A673 (cell line): ENCODE measurements at regions of chr15 and their contacts with region 1.

Region 1: DNA sequence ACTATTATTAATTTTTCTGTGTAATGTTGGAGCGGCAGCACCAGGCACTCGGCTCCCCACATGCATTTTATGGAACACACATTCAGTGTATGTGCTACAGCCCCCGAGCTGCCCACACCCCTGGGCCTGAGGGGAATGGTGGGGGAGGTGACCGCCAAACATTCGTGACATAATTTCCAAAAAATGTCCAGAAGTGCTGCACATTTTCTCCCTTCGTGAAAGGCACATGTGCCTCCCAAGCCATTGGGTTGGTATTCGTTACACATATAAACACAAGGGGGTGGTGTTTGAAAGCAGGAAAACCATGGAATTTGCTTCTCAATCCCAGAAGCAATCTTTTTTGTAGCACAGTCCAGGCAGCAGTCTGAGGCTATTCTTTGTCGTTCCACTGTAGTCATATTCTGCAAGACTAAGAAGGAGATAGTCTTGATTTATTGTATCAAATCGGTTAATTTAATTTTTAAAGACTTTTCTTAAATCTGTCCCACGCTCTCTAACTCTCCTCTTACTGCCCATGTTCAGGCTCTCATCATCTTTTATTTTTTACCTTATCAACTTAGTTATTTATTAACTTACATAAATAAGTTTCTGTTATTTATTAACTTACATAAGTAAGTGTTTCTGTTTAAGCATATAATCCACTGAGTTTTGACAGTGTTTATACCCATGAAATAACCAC is 39.2 kb upstream of the POLR2M start:
- DNase-seq: peak; percentile 53
- H3K4me3 ChIP-seq: no peak overlapping the region
- H3K27ac ChIP-seq: no peak overlapping the region
- H3K4me1 ChIP-seq: no peaks in the 10 kb centered on the region
- H3K27me3 ChIP-seq: peaks cover 8% of the 10 kb centered on the region
- CTCF ChIP-seq: peak; percentile 57

Region 2: DNA sequence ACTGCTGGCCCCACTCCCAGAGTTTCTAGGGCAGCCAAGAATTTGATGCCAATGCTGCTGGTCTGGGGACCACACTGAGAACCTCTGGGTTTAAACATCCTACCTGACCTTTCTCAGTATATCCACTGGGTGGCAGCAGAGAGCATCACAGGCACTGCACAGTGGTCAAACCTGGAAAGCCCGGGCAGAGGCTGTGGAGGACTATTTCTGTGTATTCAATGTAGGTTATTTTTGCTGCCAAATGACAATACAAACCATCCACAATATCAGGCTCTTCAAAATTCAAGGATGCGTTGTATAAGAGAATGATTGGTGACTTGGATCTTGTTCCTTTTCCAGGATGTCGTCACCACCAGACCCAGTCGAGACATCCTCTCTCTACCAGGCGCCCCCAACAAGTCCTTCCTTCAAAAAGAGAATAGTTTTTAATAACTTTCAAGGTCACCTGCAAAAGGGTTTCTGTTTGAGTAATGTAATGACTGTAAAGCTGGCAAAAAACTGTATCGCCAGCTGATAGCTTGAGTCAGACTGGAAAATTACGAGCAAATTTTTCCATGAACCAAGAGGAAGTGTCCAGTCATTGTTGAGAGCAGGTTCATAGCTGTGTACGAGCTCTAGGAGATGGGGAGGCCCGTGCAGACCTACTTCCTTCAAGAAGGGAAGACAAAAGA is 106.1 kb before region 1 on chr15:
- CTCF ChIA-PET with region 1: no interaction called
- POLR2A ChIA-PET with region 1: no interaction called
- intact Hi-C with region 1: loop called (anchors 10 kb)
- DNase-seq: peak; percentile 80
- H3K4me3 ChIP-seq: no peak overlapping the region
- H3K27ac ChIP-seq: no peak overlapping the region
- H3K4me1 ChIP-seq: no peaks in the 10 kb centered on the region
- H3K27me3 ChIP-seq: no peaks in the 10 kb centered on the region
- CTCF ChIP-seq: peak; percentile 91

Region 3: GRCh38 chr15:57861036-57861638 is 193.8 kb after region 1 on chr15:
- CTCF ChIA-PET with region 1: interaction called, 3 read pairs
- POLR2A ChIA-PET with region 1: no interaction called
- intact Hi-C with region 1: loop called (anchors 5 kb)
- DNase-seq: peak; percentile 75
- H3K4me3 ChIP-seq: no peak overlapping the region
- H3K27ac ChIP-seq: no peak overlapping the region
- H3K4me1 ChIP-seq: no peaks in the 10 kb centered on the region
- H3K27me3 ChIP-seq: no peaks in the 10 kb centered on the region
- CTCF ChIP-seq: peak; percentile 85